ENCODE measurements at regions of chr2 and their contacts with region 1.

Region 1: DNA sequence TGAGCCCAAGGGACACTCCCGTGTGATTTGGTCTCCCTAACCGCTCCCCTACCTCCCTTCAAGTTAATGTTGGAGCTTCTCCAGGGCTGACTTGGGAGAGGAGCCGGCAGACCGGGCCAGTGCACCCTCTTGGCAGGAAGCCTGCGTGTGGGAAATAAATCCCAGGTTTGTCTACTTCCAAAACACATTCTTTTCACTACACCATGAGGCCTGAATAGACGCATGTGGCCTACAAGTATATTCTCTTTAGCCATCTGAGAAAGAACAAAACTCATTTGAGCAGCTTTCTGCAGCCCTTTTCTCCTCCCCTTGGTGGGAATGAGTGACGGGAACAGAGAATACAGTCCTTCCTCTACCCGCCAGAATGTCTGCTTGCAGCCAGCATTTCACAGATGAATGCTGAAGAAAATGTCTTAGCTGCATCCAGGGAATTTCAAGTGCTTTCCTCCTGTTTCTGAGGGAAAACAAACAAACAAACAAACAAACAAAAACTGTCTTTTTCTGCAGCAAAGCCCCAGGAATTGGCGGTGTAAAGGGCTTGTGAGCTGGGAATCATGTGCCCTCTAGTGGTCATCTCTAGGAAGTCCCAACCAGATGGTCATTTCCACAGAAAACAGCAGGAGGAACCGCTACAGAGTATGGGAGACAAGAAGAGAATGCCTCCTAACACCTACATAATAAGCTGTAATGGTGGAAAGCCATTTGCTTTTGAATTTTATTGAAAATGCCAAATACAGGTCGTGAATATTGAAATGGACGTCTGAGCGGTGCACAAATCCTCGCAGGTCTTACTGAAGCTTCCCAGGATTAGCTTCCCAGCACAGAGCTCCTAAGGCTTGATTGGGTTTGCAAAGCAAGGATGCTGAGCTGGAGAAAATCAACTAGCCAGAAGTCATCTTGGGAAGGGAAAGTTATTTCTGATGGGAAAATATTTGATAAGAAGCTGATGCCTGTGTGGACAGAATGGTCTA is 41.2 kb upstream of the DAPL1 start:
- DNase-seq: peak; percentile 61 to 79 (median 72)
- H3K4me3 ChIP-seq: no peak overlapping the region
- H3K27ac ChIP-seq: no peak overlapping the region
- H3K4me1 ChIP-seq: no peaks in the 10 kb centered on the region
- H3K27me3 ChIP-seq: no peaks in the 10 kb centered on the region

Region 2: DNA sequence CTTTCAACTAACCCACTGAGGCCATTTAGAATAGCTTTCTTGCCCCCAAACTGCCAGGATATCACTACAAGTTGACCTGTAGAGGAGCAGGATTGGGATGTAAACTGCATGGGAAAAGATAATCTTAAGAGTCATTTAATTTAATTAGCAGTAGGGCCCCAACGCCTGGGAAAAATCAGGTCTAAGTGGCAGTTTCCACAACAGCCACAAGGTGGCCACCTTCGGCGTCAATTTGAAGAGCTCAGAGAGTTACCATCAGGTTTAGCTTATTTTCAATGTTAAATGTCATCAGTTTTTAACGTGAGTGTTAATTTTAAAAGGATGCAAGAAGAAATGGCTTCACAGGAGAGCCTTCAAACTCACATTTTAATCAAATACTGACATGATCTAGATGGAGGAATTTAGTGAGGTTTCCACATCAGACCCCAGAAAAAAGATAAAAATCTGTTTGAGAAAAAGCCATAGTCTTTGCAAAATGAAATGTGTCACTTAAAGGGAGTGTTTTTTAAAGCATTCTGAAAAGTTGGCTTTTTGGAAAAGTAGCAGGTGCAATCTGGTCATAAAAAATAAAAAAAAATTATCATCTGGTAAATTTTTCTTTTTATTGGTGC is 729.5 kb before region 1 on chr2:
- CTCF ChIA-PET with region 1: interaction called, 152 read pairs
- POLR2A ChIA-PET with region 1: no interaction called
- DNase-seq: peak; percentile 38 to 71 (median 58)
- H3K4me3 ChIP-seq: no peak overlapping the region
- H3K27ac ChIP-seq: no peak overlapping the region
- H3K4me1 ChIP-seq: no peaks in the 10 kb centered on the region
- H3K27me3 ChIP-seq: no peaks in the 10 kb centered on the region

Region 3: GRCh38 chr2:158773121-158773520 is 19.2 kb after region 1 on chr2:
- CTCF ChIA-PET with region 1: no interaction called
- POLR2A ChIA-PET with region 1: no interaction called
- DNase-seq: no peak
- H3K4me3 ChIP-seq: no peak overlapping the region
- H3K27ac ChIP-seq: no peak overlapping the region
- H3K4me1 ChIP-seq: no peaks in the 10 kb centered on the region
- H3K27me3 ChIP-seq: no peaks in the 10 kb centered on the region